ENCODE measurements at regions of chr6 and their contacts with region 1.

Region 1: DNA sequence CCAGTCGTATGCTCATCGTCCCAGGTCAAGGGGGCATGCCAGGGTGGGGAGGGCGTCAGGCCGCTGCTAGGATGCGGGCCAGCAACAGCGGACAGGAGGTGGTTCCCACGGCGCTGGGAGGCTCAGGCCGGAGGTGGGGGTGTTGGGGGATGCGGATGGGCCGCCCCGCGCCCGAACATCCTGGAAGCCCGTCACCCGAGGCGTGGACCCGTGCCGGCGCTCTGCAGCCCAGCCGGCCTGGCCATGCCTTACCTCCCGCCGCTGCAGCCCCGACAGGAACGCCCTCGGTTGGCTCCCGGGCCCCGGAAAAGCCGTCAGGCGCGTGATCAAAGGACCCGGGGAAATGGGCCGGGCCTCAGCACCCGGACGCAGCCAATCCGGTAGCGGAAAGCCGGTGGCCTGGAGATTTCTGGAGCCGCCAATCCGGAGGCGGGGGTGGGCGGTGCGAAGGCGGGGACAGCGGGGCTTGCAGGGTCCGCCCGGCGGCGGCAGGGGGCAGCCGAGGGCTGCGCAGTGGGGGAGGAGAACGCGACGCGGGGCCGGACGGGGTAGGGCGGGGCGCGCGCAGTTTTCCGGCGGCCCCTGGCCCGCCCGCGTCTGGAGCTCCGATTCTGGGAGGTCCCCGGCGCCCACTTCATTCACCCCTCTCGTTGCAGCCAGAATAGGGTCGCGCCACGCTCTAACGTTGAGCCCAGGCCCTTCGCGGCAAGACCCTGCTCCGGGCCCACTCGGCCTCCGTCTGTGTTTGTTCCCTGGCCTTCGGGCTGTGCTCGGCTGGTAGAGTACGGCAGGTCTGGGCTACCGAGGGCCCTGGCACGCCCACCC is at the start of gene SMIM29:
- DNase-seq: peak; percentile 98
- H3K4me3 Mint-ChIP-seq: peak within 1 kb of the TSS; percentile 96
- H3K27ac Mint-ChIP-seq: peak within 1 kb of the TSS; percentile 96
- H3K4me1 Mint-ChIP-seq: peaks cover 51% of the 10 kb centered on the region
- H3K27me3 Mint-ChIP-seq: peaks cover 6% of the 10 kb centered on the region

Region 2: DNA sequence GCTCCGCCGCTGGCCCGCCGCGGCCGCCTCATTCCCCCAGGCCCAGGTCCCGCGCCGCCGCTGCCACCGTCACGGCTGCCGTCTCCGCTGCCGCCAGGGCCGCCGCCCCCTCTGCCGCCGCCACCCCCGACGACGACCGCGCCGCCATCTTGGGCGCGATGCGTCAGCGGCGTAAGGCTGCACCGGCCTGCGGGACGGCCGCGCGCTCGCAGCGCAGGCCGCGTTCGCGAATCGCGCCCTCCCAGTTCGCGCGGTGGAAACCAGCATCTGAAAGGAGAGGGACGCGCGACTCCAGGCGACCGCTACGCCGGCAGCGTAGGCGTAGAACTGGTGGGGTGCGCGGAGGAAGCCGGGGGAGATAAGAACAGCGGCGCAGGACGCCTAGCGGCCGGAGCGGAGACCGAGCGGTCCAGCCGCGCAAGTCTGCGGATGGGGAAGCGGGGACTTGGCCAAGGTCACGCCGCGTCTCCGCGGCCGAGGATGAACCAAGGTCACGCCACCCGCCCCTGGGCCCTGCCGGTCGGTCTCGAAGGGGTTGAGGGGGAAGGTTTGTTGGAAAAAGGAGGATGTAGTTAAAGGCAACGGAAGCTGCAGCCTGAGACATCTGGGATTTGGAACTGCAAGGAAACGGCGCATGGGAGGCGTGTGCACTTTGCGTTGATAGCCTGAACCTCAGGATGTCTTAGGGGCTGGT is 143.7 kb after region 1 on chr6 and contains the start of gene NUDT3:
- CTCF ChIA-PET with region 1: interaction called, 24 read pairs
- DNase-seq: peak; percentile 94
- H3K4me3 Mint-ChIP-seq: no peak within 1 kb of the TSS
- H3K27ac Mint-ChIP-seq: peak within 1 kb of the TSS; percentile 86
- H3K4me1 Mint-ChIP-seq: peaks cover 16% of the 10 kb centered on the region
- H3K27me3 Mint-ChIP-seq: peaks cover 3% of the 10 kb centered on the region

Region 3: GRCh38 chr6:34414999-34415858 is 166.3 kb after region 1 on chr6:
- CTCF ChIA-PET with region 1: interaction called, 106 read pairs
- DNase-seq: peak; percentile 63
- H3K4me3 Mint-ChIP-seq: no peak overlapping the region
- H3K27ac Mint-ChIP-seq: no peak overlapping the region
- H3K4me1 Mint-ChIP-seq: peaks cover 11% of the 10 kb centered on the region
- H3K27me3 Mint-ChIP-seq: no peaks in the 10 kb centered on the region

Measured in activated naive CD4-positive, alpha-beta T cell treated with anti-CD3 and anti-CD28 coated beads, Interleukin-2, amount 10 ng/mL, durations not matched to agents 7 days and 5 days (primary cell).